ENCODE measurements at regions of chr3 and their contacts with region 1.

Region 1: GRCh38 chr3:172673210-172673679 is 37.6 kb downstream of the NCEH1 start:
- DNase-seq: peak; percentile 80
- ATAC-seq: peak; percentile 62
- H3K4me3 ChIP-seq: no peak overlapping the region
- H3K27ac ChIP-seq: no peak overlapping the region
- H3K4me1 ChIP-seq: peaks cover 18% of the 10 kb centered on the region
- H3K27me3 ChIP-seq: no peaks in the 10 kb centered on the region
- CTCF ChIP-seq: peak; percentile 78
- POLR2A ChIP-seq: no peak
- RAD21 ChIP-seq: peak; percentile 77

Region 2: DNA sequence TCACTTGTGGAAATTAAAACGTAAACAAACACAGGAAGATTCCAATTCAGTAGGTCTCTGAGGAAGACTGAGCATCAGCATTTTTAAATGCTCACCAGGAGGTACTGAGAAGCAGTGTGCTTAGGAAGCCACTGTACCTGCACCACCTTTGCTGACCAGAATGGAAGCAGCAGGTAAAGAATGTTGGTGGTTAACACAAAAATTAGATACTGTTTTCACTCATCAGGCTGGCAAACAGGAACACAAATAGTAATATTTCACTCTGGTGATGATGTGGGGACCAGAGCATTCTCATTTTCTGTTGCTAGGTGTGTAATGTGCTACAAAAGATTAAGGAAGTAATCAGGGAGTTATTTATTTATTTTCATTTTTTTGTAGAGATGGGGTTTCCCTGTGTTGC is 195.1 kb before region 1 on chr3:
- CTCF ChIA-PET with region 1: no interaction called
- POLR2A ChIA-PET with region 1: no interaction called
- dilution Hi-C with region 1: no loop called
- in situ Hi-C with region 1: no loop called
- intact Hi-C with region 1: no loop called
- DNase-seq: no peak
- ATAC-seq: no peak
- H3K4me3 ChIP-seq: no peak overlapping the region
- H3K27ac ChIP-seq: no peak overlapping the region
- H3K4me1 ChIP-seq: no peaks in the 10 kb centered on the region; the same call in 1 of the 2 replicates
- H3K27me3 ChIP-seq: no peaks in the 10 kb centered on the region; the same call in none of the 2 replicates
- CTCF ChIP-seq: no peak
- POLR2A ChIP-seq: no peak
- RAD21 ChIP-seq: no peak

Region 3: GRCh38 chr3:172616031-172616461 is 57.2 kb before region 1 on chr3:
- CTCF ChIA-PET with region 1: no interaction called
- POLR2A ChIA-PET with region 1: no interaction called
- dilution Hi-C with region 1: no loop called
- in situ Hi-C with region 1: no loop called
- intact Hi-C with region 1: no loop called
- DNase-seq: peak; percentile 34
- ATAC-seq: peak; percentile 63
- H3K4me3 ChIP-seq: no peak overlapping the region
- H3K27ac ChIP-seq: no peak overlapping the region
- H3K4me1 ChIP-seq: no peaks in the 10 kb centered on the region; the same call in 1 of the 2 replicates
- H3K27me3 ChIP-seq: no peaks in the 10 kb centered on the region
- CTCF ChIP-seq: no peak
- POLR2A ChIP-seq: no peak
- RAD21 ChIP-seq: no peak

Region 4: DNA sequence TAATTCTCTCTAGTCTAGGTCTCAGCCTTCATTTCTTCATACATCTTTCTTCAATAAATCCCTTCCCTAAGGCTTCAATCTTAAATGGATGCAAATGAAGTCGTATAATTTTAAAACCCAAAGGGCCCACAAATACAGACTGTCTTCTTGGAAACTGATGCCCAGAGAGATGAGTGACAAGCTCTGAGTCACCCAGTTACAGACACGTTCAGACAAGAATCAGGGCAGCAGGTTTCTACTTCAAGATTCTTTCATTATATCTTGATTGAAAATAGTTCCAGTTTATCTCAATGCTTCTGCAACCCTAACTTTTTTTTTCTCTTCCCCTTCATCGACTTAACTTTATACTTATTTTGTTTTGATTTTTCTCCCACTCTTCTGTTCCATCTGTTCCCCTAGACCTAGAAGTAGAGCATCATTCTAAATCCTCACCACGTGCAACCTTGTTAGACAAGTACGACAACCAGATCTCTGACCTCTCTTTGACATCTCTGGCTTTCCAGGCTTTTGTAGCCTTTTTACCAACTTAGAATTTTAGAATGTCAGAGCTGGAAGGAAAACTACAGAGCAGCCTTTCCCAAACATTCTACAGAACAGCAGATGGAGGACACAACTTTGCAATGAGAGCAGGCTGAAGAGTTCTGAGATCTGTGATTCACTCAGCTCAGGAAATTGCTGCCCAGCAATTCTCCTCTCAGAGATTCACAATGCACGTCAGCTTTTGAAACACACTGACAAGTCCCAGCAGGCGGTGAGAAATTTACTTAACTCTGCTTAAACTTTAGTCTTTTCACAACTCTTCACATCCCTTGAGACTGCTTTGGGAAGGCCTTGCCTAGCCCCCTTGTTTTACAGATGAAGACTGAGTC is 12.3 kb after region 1 on chr3:
- CTCF ChIA-PET with region 1: interaction called, 11 read pairs
- POLR2A ChIA-PET with region 1: no interaction called
- dilution Hi-C with region 1: no loop called
- in situ Hi-C with region 1: no loop called
- intact Hi-C with region 1: no loop called
- DNase-seq: peak; percentile 50
- ATAC-seq: peak; percentile 66
- H3K4me3 ChIP-seq: no peak overlapping the region
- H3K27ac ChIP-seq: no peak overlapping the region
- H3K4me1 ChIP-seq: peaks cover 8% of the 10 kb centered on the region; the same call in 1 of the 2 replicates
- H3K27me3 ChIP-seq: no peaks in the 10 kb centered on the region
- CTCF ChIP-seq: no peak
- POLR2A ChIP-seq: no peak
- RAD21 ChIP-seq: no peak

Region 5: GRCh38 chr3:172710664-172711453 is 37.6 kb after region 1 on chr3 and contains the start of gene NCEH1:
- CTCF ChIA-PET with region 1: interaction called, 18 read pairs
- POLR2A ChIA-PET with region 1: no interaction called
- dilution Hi-C with region 1: no loop called
- in situ Hi-C with region 1: no loop called
- intact Hi-C with region 1: loop called (anchors 1 kb)
- DNase-seq: peak; percentile 99
- ATAC-seq: peak; percentile 95
- H3K4me3 ChIP-seq: peak within 1 kb of the TSS; percentile 77
- H3K27ac ChIP-seq: peak within 1 kb of the TSS; percentile 88
- H3K4me1 ChIP-seq: peaks cover 8% of the 10 kb centered on the region
- H3K27me3 ChIP-seq: no peaks in the 10 kb centered on the region
- CTCF ChIP-seq: peak; percentile 93
- POLR2A ChIP-seq: peak; percentile 97
- RAD21 ChIP-seq: peak; percentile 79
- total RNA-seq, gene NCEH1: 23.3 and 28.9 TPM in 2 replicates

Region 6: DNA sequence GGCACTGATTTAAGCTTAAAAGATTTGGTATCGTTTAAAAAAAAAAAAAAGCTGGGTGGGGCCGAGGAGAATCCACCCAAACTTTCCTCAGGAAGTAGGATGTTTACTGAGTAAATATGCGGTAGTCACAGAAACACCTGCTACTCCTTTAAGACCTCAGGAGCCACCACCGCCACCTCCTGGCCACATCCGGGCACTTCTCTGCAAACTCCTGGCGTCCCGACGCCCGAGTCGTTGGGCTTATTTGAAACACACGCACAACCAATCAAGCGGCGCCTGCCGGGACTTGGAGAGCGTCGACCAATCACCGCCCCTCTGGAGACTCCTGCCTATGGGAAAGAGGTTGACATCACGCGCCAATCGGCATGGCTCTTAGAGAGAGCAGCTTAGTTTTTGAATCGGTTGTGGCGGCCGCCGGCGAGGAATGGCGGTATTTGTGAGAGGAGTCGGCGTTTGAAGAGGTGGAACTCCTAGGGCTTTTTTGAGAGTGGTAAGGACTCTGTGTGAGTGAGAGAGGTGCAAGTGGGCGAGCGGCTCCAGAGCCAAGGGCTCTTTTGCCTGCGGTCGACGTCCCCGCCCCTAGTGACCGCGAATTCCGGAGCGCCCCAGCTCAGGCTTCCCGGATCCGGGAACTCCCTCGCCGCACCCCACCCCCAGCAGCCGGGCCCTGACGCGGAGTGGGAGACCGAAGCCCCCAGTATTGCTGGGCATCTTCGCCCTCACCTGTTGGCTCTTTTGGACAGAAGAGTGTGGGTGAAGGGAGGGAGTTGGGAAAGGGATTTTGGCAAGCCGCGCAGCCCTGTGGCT is 77.3 kb after region 1 on chr3 and contains the start of gene ECT2:
- CTCF ChIA-PET with region 1: interaction called, 8 read pairs
- POLR2A ChIA-PET with region 1: no interaction called
- dilution Hi-C with region 1: no loop called
- in situ Hi-C with region 1: no loop called
- intact Hi-C with region 1: loop called (anchors 1 kb)
- DNase-seq: peak; percentile 100
- ATAC-seq: peak; percentile 98
- H3K4me3 ChIP-seq: peak within 1 kb of the TSS; percentile 83
- H3K27ac ChIP-seq: peak within 1 kb of the TSS; percentile 74
- H3K4me1 ChIP-seq: no peaks in the 10 kb centered on the region; the same call in 1 of the 2 replicates
- H3K27me3 ChIP-seq: no peaks in the 10 kb centered on the region
- CTCF ChIP-seq: peak; percentile 89
- POLR2A ChIP-seq: no peak; the same call in 1 of the 2 replicates
- RAD21 ChIP-seq: peak; percentile 72
- total RNA-seq, gene ECT2: 37.8 and 55.8 TPM in 2 replicates

Region 7: DNA sequence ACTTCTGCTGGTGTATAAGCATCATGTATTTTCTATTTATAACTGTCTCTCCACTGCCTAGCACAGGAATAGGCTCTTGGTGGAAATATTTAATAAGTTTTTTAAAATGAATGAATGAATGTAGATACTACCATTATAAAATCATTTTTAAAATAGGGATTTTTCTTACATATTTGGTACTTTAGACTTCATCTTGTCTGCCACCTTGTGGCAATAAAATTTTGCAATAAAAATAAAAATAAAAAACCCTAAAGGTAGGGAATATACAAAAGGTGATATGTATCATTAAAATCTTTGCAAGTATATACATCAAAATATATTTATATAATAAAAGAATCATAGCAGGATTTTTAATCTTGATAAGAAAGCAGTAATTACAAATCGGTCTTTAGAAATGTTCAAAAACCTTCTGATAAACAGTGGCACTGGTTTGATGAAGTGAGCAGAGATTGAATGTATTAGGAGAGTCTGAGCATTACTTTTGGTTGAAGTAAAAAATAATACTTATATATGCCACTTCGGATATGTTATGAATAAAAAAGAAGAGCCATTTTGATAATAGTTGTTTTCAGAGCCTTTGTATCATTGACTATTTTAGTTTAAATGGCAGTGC is 372.6 kb after region 1 on chr3:
- CTCF ChIA-PET with region 1: no interaction called
- POLR2A ChIA-PET with region 1: no interaction called
- dilution Hi-C with region 1: no loop called
- in situ Hi-C with region 1: no loop called
- intact Hi-C with region 1: loop called (anchors 2 kb)
- DNase-seq: no peak
- ATAC-seq: no peak
- H3K4me3 ChIP-seq: no peak overlapping the region
- H3K27ac ChIP-seq: no peak overlapping the region
- H3K4me1 ChIP-seq: no peaks in the 10 kb centered on the region
- H3K27me3 ChIP-seq: no peaks in the 10 kb centered on the region
- CTCF ChIP-seq: peak; percentile 43
- POLR2A ChIP-seq: no peak
- RAD21 ChIP-seq: no peak